A673 (cell line): ENCODE measurements at regions of chr12 and their contacts with region 1.

Region 1: DNA sequence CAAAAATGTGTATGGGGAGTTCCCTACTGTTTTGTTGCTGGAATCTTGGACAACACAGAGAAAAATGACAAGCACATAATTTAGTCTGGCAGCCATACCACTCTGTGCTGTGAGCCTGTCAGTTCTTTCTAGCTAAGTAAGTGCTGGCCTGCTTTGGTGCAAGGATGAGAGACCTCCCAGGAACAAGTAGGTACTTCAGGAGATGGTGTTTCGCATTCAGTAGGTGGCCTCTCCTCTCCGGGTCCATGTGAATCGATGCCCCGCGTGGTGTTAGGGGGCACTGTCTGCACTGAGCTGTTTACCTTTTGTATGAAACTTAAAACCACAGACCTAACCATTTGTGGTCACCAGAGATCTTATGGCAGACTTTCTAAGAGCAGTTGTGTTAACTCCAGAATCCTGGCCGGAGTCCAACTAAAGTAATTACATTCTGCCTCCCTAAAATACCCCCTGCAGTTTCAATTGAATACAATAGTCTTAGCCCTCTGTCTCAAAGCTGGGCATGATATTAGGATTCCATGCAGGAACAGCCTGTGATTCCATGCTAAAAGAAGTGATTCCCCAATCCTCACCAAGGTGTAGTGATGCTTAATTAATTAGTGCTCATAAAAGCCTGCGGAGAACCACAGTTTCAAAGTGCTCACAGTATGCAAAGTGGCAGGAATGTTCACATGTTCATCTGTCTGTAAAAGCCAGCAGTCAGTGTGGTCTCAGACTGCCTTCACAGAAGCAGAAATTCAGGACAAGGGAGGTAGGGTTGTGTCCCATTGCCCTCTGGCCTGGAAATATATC is 64.2 kb downstream of the LLPH start:
- DNase-seq: peak; percentile 99
- H3K4me3 ChIP-seq: no peak overlapping the region
- H3K27ac ChIP-seq: peak overlapping the region; percentile 99
- H3K4me1 ChIP-seq: peaks cover 60% of the 10 kb centered on the region
- H3K27me3 ChIP-seq: no peaks in the 10 kb centered on the region
- CTCF ChIP-seq: peak; percentile 42

Region 2: DNA sequence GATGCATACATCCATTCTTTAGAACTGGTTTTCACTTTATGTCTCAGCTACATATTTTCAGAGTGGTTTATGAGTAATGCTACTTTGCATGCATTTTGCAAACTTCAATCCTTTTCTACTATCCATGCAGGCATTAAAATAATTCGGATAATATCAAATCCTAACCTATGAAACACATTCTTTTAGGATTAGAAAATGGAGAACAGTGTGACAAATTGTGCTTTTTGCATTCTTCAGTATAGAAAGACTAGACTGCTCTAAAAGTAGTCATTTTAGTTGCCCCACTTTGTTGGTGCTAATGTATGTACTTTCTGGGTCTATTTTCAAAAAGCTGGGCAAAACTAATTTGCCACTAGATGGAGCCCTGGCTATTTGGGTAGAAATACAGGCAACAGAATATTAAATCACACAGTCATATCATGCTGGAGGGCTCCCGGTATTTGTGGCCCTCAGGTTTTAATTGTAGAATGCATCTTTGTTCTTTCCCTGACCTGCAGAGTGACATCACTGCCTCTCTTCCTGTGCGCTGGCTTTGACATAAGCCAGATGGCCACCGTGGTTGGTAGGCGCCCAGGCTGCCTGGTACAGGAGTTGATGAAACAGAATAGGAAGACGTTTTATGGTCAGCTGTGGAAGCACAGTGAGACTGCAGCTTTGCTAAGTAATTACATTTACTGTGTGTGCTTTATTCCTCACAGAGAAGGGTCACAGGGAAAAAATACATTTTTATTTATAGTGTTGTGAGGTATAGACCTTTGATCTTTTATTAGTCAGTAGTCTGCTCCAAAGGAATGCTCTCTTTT is 759.8 kb before region 1 on chr12:
- CTCF ChIA-PET with region 1: no interaction called
- POLR2A ChIA-PET with region 1: no interaction called
- intact Hi-C with region 1: loop called (anchors 5 kb)
- DNase-seq: peak; percentile 88
- H3K4me3 ChIP-seq: no peak overlapping the region
- H3K27ac ChIP-seq: peak overlapping the region; percentile 80
- H3K4me1 ChIP-seq: peaks cover 53% of the 10 kb centered on the region
- H3K27me3 ChIP-seq: no peaks in the 10 kb centered on the region
- CTCF ChIP-seq: peak; percentile 82

Region 3: DNA sequence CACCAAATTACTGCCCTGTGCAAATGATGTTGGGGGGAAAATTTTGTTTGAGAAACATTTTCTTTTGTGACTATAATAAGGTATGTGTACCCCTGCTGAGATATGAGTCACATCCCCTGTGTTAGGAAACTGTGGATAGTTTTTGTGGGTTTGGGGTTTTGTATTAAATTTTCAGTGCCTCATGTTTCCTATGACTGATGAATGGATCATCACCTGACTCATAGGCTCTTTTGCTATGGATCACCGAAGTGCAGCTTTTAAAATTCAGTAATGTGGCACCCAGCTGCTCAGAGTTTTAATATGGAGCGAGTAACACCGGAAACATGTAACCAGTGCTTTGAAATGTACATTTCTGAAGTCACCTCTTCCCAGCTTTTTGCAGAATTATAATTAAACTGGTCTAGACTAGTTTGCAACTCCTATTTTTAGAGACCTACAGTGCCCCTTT is 409.4 kb before region 1 on chr12:
- CTCF ChIA-PET with region 1: no interaction called
- POLR2A ChIA-PET with region 1: no interaction called
- intact Hi-C with region 1: loop called (anchors 2 kb)
- DNase-seq: peak; percentile 95
- H3K4me3 ChIP-seq: no peak overlapping the region
- H3K27ac ChIP-seq: peak overlapping the region; percentile 25
- H3K4me1 ChIP-seq: peaks cover 22% of the 10 kb centered on the region
- H3K27me3 ChIP-seq: no peaks in the 10 kb centered on the region
- CTCF ChIP-seq: no peak

Region 4: GRCh38 chr12:65853489-65854370 is 212.6 kb before region 1 on chr12:
- CTCF ChIA-PET with region 1: no interaction called
- POLR2A ChIA-PET with region 1: no interaction called
- intact Hi-C with region 1: loop called (anchors 10 kb)
- DNase-seq: no peak
- H3K4me3 ChIP-seq: no peak overlapping the region
- H3K27ac ChIP-seq: no peak overlapping the region
- H3K4me1 ChIP-seq: peaks cover 59% of the 10 kb centered on the region
- H3K27me3 ChIP-seq: no peaks in the 10 kb centered on the region
- CTCF ChIP-seq: no peak

Region 5: GRCh38 chr12:65948320-65949008 is 117.9 kb before region 1 on chr12:
- CTCF ChIA-PET with region 1: no interaction called
- POLR2A ChIA-PET with region 1: no interaction called
- intact Hi-C with region 1: loop called (anchors 2 kb)
- DNase-seq: peak; percentile 93
- H3K4me3 ChIP-seq: peak overlapping the region; percentile 19
- H3K27ac ChIP-seq: peak overlapping the region; percentile 77
- H3K4me1 ChIP-seq: peaks cover 62% of the 10 kb centered on the region
- H3K27me3 ChIP-seq: no peaks in the 10 kb centered on the region
- CTCF ChIP-seq: no peak

Region 6: DNA sequence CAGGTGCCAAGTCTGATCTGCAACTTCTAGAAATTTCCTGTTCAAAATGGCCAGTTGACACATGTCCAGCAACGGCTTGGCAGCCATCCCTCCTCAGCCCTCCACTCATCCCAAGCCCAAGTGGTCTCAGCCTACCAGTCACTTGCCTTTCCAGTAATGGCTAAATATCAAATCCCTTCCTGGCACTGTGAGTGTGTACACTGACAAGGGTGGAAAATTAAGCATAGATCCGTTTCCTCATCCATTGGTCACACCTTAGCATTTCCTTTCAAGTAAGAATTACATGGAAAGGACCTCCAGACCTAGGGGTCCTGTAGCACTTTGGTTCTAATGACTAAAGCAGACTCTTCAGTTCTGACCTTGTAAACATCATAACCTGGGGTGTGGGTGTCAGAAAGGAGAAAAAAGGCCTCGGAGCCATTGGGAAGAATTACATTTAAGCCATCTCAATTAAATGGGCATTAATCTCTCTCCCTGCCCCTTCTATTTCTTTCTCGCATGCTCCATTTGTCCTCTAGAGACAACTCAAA is 48.8 kb after region 1 on chr12:
- CTCF ChIA-PET with region 1: interaction called, 3 read pairs
- POLR2A ChIA-PET with region 1: no interaction called
- intact Hi-C with region 1: loop called (anchors 1 kb)
- DNase-seq: peak; percentile 91
- H3K4me3 ChIP-seq: no peak overlapping the region
- H3K27ac ChIP-seq: peak overlapping the region; percentile 79
- H3K4me1 ChIP-seq: peaks cover 61% of the 10 kb centered on the region
- H3K27me3 ChIP-seq: no peaks in the 10 kb centered on the region
- CTCF ChIP-seq: no peak